ENCODE measurements at regions of chr12 and their contacts with region 1.

Region 1: DNA sequence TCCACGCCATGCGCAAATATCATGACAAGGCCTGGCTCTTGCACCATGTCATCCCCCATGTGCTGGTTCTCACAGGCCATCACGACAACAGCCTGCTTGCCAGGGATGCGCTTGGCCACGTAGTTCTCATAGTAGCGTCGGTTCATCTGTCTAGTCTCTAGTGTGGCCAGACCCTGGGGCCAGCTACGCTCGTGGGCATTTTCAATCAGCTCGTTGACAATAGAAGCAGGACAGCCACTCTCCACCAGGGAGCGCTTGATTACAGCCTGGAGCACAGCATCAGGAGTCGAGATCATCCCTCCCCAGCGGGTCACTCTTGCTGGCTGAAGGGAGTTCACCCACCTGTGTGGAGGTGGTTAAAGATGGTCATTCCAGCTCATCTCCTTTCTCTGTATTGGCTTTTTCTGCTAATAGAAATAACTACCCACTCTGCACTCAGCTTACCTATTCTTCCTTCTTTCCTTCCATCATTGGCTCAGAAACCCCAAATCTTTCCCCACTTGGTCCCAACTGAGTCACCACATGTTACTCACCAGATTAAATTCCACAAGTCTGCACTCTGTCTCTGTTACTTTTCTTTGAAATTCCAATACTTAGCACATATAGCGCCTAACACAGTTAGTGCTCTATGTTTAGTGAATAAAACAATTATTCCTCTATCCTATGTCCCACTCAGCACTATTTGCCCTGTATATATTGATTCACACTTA is 15.1 kb downstream of the RNF41 start:
- DNase-seq: peak in 11 of 14 experiments; percentile 17 to 64 (median 25)
- ATAC-seq: peak; percentile 65
- H3K4me3 ChIP-seq: no peak overlapping the region
- H3K4me3 Mint-ChIP-seq: no peak overlapping the region
- H3K27ac ChIP-seq: no peak overlapping the region
- H3K27ac Mint-ChIP-seq: peak overlapping the region; percentile 40
- H3K4me1 ChIP-seq: no peaks in the 10 kb centered on the region
- H3K4me1 Mint-ChIP-seq: peaks cover 6% of the 10 kb centered on the region
- H3K27me3 ChIP-seq: no peaks in the 10 kb centered on the region
- H3K27me3 Mint-ChIP-seq: no peaks in the 10 kb centered on the region
- CTCF ChIP-seq: no peak

Region 2: GRCh38 chr12:56020423-56021184 is 186.0 kb before region 1 on chr12 and contains the start of gene IKZF4:
- CTCF ChIA-PET with region 1: no interaction called
- POLR2A ChIA-PET with region 1: no interaction called
- intact Hi-C with region 1: no loop called
- DNase-seq: peak in 3 of 14 experiments; percentile 2 to 38 (median 29)
- ATAC-seq: peak; percentile 16
- H3K4me3 ChIP-seq: peak within 1 kb of the TSS; percentile 59
- H3K4me3 Mint-ChIP-seq: peak within 1 kb of the TSS; percentile 87
- H3K27ac ChIP-seq: peak within 1 kb of the TSS in 1 of 2 donors; percentile 3
- H3K27ac Mint-ChIP-seq: peak within 1 kb of the TSS; percentile 75
- H3K4me1 ChIP-seq: peaks cover 33% of the 10 kb centered on the region
- H3K4me1 Mint-ChIP-seq: peaks cover 24% of the 10 kb centered on the region
- H3K27me3 ChIP-seq: no peaks in the 10 kb centered on the region
- H3K27me3 Mint-ChIP-seq: no peaks in the 10 kb centered on the region
- CTCF ChIP-seq: no peak
- total RNA-seq, gene IKZF4: 2.5 to 5.0 TPM

Region 3: GRCh38 chr12:56387152-56387736 is 180.6 kb after region 1 on chr12:
- CTCF ChIA-PET with region 1: no interaction called
- POLR2A ChIA-PET with region 1: no interaction called
- intact Hi-C with region 1: no loop called
- DNase-seq: no peak
- ATAC-seq: no peak
- H3K4me3 ChIP-seq: no peak overlapping the region
- H3K4me3 Mint-ChIP-seq: no peak overlapping the region
- H3K27ac ChIP-seq: no peak overlapping the region
- H3K27ac Mint-ChIP-seq: no peak overlapping the region
- H3K4me1 ChIP-seq: no peaks in the 10 kb centered on the region
- H3K4me1 Mint-ChIP-seq: no peaks in the 10 kb centered on the region
- H3K27me3 ChIP-seq: no peaks in the 10 kb centered on the region
- H3K27me3 Mint-ChIP-seq: no peaks in the 10 kb centered on the region
- CTCF ChIP-seq: no peak

Region 4: GRCh38 chr12:56461235-56462159 is 254.9 kb after region 1 on chr12:
- CTCF ChIA-PET with region 1: no interaction called
- POLR2A ChIA-PET with region 1: interaction called, 4 read pairs
- intact Hi-C with region 1: loop called in 1 of 2 experiments (anchors 5 kb)
- DNase-seq: no peak
- ATAC-seq: no peak
- H3K4me3 ChIP-seq: no peak overlapping the region
- H3K4me3 Mint-ChIP-seq: no peak overlapping the region
- H3K27ac ChIP-seq: no peak overlapping the region
- H3K27ac Mint-ChIP-seq: no peak overlapping the region
- H3K4me1 ChIP-seq: peaks cover 4% of the 10 kb centered on the region
- H3K4me1 Mint-ChIP-seq: peaks cover 5% of the 10 kb centered on the region
- H3K27me3 ChIP-seq: no peaks in the 10 kb centered on the region
- H3K27me3 Mint-ChIP-seq: no peaks in the 10 kb centered on the region
- CTCF ChIP-seq: no peak

Region 5: DNA sequence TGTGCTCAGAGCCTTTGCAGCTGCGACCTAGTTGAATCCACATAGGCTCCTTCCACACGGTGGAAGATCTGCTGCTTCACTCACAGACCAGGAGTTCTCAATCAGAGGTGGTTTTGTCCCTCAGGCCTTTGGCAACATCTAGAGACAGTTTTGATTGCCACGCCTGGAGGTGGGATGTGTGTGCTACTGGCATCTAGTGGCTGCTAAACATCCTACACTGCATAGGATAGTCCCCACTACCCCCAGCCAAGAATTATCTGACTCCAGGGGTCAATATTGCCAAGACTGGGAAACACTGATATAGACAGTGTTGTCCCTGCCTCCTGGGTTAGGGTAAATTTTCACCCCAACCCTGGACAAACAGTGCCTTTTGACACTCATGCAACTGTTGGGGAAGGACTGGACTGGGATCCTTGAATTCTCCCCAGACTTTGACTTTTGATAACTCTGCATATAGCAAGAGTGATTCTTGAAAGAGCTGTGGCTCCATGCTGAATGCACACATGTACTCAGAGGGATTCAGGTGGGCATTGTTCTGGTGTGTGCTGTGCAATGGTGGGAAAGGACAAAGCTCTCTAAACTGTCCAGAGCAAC is 383.7 kb after region 1 on chr12:
- CTCF ChIA-PET with region 1: no interaction called
- POLR2A ChIA-PET with region 1: no interaction called
- intact Hi-C with region 1: no loop called
- DNase-seq: peak in 1 of 14 experiments; percentile 29
- ATAC-seq: peak; percentile 64
- H3K4me3 ChIP-seq: no peak overlapping the region
- H3K4me3 Mint-ChIP-seq: no peak overlapping the region
- H3K27ac ChIP-seq: no peak overlapping the region
- H3K27ac Mint-ChIP-seq: no peak overlapping the region
- H3K4me1 ChIP-seq: no peaks in the 10 kb centered on the region
- H3K4me1 Mint-ChIP-seq: peaks cover 8% of the 10 kb centered on the region
- H3K27me3 ChIP-seq: no peaks in the 10 kb centered on the region
- H3K27me3 Mint-ChIP-seq: no peaks in the 10 kb centered on the region
- CTCF ChIP-seq: no peak

Measured in CD4-positive, alpha-beta T cell (primary cell).